ENCODE measurements at regions of chr6 and their contacts with region 1.

Region 1: GRCh38 chr6:128520436-128521281 is at the start of gene PTPRK:
- DNase-seq: peak; percentile 94
- H3K4me3 ChIP-seq: peak within 1 kb of the TSS; percentile 81
- H3K27ac ChIP-seq: peak within 1 kb of the TSS; percentile 91
- H3K4me1 ChIP-seq: peaks cover 47% of the 10 kb centered on the region
- H3K27me3 ChIP-seq: no peaks in the 10 kb centered on the region
- CTCF ChIP-seq: peak; percentile 24; the same call in 1 of the 2 replicates
- total RNA-seq, gene PTPRK: 82.5 and 89.3 TPM in 2 replicates

Region 2: GRCh38 chr6:127737009-127737486 is 783.6 kb before region 1 on chr6:
- CTCF ChIA-PET with region 1: no interaction called
- POLR2A ChIA-PET with region 1: interaction called, 5 read pairs
- intact Hi-C with region 1: loop called (anchors 2 kb)
- DNase-seq: peak; percentile 40 to 56
- H3K4me3 ChIP-seq: no peak overlapping the region
- H3K27ac ChIP-seq: no peak overlapping the region
- H3K4me1 ChIP-seq: no peaks in the 10 kb centered on the region
- H3K27me3 ChIP-seq: no peaks in the 10 kb centered on the region
- CTCF ChIP-seq: peak; percentile 92

Region 3: DNA sequence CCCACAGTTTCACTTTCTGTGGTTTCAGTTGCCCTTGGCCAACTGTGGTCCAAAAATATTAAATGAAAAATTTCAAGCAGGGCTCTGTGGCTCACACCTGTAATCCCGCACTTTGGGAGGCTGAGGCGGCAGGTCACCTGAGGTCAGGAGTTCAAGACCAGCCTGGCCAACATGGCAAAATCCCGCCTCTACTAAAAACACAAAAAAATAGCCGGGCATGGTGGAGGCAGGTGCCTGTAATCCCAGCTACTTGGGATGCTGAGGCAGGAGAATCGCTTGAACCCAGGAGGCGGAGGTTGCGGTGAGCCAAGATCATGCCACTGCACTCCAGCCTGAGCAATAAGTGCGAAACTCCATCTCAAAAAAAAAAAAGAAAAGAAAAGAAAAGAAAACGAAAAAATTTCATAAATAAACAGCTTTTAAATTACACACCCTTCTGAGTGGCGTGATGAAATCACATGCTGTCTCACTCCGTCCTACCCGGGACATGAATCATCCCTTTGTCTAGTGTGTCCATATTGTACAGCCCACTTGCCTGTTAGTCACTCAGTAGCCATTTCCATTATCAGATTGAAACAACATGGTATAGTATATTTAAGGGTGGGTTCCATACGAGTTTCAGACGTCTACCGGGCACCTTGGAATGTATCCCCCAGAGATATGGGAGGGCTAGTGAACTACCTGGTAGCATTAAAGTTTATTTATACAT is 11.9 kb before region 1 on chr6:
- CTCF ChIA-PET with region 1: no interaction called
- POLR2A ChIA-PET with region 1: interaction called, 23 read pairs
- intact Hi-C with region 1: no loop called
- DNase-seq: peak; percentile 53 to 72
- H3K4me3 ChIP-seq: no peak overlapping the region
- H3K27ac ChIP-seq: peak overlapping the region; percentile 28; the same call in 1 of the 2 replicates
- H3K4me1 ChIP-seq: peaks cover 46% of the 10 kb centered on the region
- H3K27me3 ChIP-seq: no peaks in the 10 kb centered on the region
- CTCF ChIP-seq: no peak

Region 4: GRCh38 chr6:128600397-128600951 is 79.8 kb after region 1 on chr6:
- CTCF ChIA-PET with region 1: no interaction called
- POLR2A ChIA-PET with region 1: no interaction called
- intact Hi-C with region 1: loop called (anchors 1 kb)
- DNase-seq: peak; percentile 47 to 78
- H3K4me3 ChIP-seq: no peak overlapping the region
- H3K27ac ChIP-seq: peak overlapping the region; percentile 81
- H3K4me1 ChIP-seq: peaks cover 52% of the 10 kb centered on the region
- H3K27me3 ChIP-seq: no peaks in the 10 kb centered on the region
- CTCF ChIP-seq: no peak

Region 5: DNA sequence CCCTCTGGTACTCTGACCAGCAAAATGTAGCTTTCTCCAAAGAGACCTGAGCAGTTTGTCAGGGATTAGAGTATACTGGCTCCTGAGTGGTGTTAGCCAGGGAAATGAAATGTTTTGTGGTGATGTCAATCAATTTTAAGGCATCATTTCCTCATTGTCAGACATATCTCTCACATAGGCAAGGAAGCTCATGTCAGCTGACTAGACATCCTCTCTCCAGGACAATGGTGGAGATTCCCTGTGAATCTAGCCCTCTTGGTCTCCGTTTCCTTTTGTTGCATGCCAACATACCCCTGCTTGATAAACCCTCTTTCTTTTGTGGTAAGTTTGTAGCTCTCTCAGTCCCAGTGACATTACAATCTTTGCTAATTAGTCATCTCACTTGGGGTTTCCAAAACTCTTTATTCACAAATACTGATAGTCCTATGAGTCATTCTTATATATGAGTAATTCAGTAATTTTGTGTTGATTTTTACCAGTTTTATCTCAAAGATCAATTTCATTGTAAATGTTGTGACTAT is 135.4 kb after region 1 on chr6:
- CTCF ChIA-PET with region 1: interaction called, 5 read pairs
- POLR2A ChIA-PET with region 1: no interaction called
- intact Hi-C with region 1: loop called (anchors 2 kb)
- DNase-seq: peak; percentile 56 to 97
- H3K4me3 ChIP-seq: peak overlapping the region; percentile 1; the same call in 1 of the 2 replicates
- H3K27ac ChIP-seq: peak overlapping the region; percentile 89
- H3K4me1 ChIP-seq: peaks cover 43% of the 10 kb centered on the region
- H3K27me3 ChIP-seq: no peaks in the 10 kb centered on the region
- CTCF ChIP-seq: no peak

Region 6: DNA sequence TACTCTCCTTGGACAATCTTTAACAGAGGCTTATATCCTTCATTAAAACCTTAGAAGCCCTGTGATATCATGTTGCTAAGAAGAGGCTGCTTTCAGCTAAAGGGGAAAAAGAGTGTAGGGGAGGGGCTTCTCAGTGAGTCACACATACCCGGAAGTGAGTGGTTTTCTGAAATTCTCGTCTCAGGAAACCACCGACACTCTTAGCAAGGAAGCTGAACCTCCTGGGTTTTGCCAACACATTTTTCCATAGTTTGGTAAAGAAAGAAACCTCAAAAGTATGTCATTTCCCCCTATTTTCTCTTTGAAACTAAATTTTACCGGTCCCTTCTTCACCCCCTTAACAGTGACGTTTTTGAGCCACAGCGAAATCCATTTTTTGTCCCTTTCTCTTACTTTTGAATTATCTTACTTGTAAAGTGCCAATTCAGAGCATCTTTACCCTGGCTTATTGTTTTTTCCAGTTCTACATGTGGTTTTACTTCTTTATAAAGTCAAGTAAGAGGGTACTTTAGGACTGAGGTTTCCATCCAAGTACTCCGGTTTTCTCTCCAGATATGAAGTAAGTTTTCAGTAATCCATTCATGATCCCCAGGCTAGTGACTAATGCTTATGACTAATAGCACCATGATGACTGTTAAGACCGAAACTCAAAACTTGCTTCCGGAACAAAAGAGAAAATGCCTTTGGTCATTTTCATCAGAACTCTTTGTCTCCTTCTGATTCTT is 970.0 kb after region 1 on chr6:
- CTCF ChIA-PET with region 1: no interaction called
- POLR2A ChIA-PET with region 1: no interaction called
- intact Hi-C with region 1: loop called (anchors 5 kb)
- DNase-seq: peak; percentile 57 to 92
- H3K4me3 ChIP-seq: peak overlapping the region; percentile 33; the same call in 1 of the 2 replicates
- H3K27ac ChIP-seq: peak overlapping the region; percentile 98
- H3K4me1 ChIP-seq: peaks cover 35% of the 10 kb centered on the region
- H3K27me3 ChIP-seq: no peaks in the 10 kb centered on the region
- CTCF ChIP-seq: no peak